ENCODE measurements at regions of chr3 and their contacts with region 1.

Region 1: GRCh38 chr3:22893644-22894325 is 309.3 kb upstream of the UBE2E2 start:
- DNase-seq: no peak
- H3K4me3 ChIP-seq: no peak overlapping the region
- H3K27ac ChIP-seq: no peak overlapping the region
- H3K4me1 ChIP-seq: peaks cover 0 to 32% (median 21%) of the 10 kb centered on the region in 4 donors
- H3K27me3 ChIP-seq: no peaks in the 10 kb centered on the region
- CTCF ChIP-seq: no peak
- EP300 ChIP-seq: no peak
- POLR2A ChIP-seq: no peak

Region 2: GRCh38 chr3:22175947-22176346 is 717.8 kb before region 1 on chr3:
- intact Hi-C with region 1: loop called (anchors 10 kb)
- DNase-seq: no peak
- H3K4me3 ChIP-seq: no peak overlapping the region
- H3K27ac ChIP-seq: no peak overlapping the region
- H3K4me1 ChIP-seq: no peaks in the 10 kb centered on the region
- H3K27me3 ChIP-seq: no peaks in the 10 kb centered on the region
- CTCF ChIP-seq: peak in 1 of 3 experiments; percentile 29
- EP300 ChIP-seq: no peak
- POLR2A ChIP-seq: no peak